A673 (cell line): ENCODE measurements at regions of chr15 and their contacts with region 1.

Region 1: DNA sequence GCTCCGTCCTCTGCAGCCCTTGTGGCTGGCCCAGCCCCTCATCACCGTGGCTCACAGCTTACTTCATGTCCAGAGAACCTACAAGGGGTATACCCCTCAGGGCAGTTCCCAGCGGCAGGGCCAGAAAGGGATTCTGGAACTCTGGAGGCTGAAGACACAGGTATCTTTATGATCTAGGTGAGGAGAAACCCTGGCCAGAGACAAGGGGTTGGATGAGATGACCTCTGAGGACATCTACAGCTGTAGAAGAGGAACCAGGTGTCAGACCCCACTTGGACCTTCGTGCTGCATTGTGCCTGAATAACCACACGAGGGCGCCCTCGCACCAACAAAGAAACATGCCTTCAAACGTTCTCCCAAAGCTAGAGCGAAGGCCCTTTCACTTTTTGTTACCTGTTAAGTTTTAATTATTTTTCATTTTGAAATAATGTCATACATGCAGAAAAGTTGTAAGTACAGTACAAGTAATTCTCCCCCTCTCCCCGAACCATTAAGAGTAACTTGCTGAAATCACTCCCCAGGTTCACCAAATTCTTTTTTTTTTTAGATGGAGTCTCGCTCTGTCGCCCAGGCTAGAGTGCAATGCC is 118.7 kb upstream of the SMAD3 start:
- DNase-seq: peak; percentile 74
- H3K4me3 ChIP-seq: peak overlapping the region; percentile 20
- H3K27ac ChIP-seq: no peak overlapping the region
- H3K4me1 ChIP-seq: no peaks in the 10 kb centered on the region
- H3K27me3 ChIP-seq: no peaks in the 10 kb centered on the region
- CTCF ChIP-seq: peak; percentile 92

Region 2: DNA sequence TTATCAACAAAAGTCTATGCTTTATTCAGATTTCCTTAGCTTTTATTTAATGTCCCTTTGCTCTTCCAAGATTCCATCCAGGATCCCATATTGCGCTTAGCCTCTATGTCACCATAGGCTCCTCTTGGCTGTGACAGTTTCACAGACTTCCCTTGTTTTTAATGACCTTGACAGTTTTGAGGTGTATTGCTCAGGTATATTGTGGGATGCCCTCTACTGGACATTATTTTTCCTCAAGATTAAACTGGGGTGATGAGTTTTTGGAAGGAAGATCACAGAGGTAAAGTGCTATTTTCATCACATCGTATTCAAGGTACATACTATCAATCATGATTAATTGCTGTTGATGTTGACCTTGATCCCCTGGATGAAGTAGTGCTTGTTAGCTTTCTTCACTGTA is 19.6 kb after region 1 on chr15:
- CTCF ChIA-PET with region 1: no interaction called
- POLR2A ChIA-PET with region 1: no interaction called
- intact Hi-C with region 1: no loop called
- DNase-seq: no peak
- H3K4me3 ChIP-seq: no peak overlapping the region
- H3K27ac ChIP-seq: no peak overlapping the region
- H3K4me1 ChIP-seq: no peaks in the 10 kb centered on the region
- H3K27me3 ChIP-seq: no peaks in the 10 kb centered on the region
- CTCF ChIP-seq: peak; percentile 31

Region 3: DNA sequence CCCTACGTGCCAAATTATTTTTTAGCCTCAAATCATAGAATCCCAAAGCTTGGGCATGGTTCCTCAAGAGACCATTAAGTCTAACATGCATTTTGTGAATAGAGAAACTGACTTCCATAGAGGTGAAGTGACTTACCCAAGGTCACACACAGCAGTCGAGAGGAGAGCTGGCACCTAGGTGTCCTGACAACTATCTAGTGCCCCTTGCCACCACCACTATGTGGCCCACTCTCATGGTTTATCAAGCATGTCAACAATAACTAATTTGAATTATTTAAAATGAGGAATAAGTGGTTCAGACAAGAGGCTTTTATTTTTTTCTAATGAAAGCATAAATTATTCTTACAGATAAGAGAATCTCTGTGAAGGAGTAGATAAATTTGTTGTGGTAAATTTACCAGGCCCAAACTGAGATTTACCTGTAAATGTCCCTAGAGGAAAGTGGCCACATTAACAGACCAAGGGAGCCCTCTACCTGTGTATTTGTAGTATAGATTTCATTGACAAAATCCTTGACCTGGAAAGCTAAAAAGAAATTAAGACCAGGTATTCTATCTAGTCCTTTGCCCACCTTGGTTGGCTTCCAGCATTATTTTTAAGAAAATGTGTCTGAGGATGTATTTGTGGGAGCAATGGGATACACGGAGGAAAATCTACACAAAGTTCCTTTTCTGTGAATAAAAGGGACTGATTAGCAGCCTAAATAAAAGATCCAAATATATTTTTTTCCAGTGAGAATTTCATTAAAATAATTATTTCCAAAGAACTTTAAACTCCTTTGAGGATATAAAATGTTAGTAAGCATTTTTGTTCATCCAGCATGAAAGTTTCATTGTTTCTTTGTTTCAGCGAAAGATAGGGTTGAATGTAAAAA is 357.1 kb after region 1 on chr15:
- CTCF ChIA-PET with region 1: interaction called, 9 read pairs
- POLR2A ChIA-PET with region 1: no interaction called
- intact Hi-C with region 1: loop called (anchors 1 kb)
- DNase-seq: peak; percentile 17
- H3K4me3 ChIP-seq: no peak overlapping the region
- H3K27ac ChIP-seq: no peak overlapping the region
- H3K4me1 ChIP-seq: peaks cover 13% of the 10 kb centered on the region
- H3K27me3 ChIP-seq: no peaks in the 10 kb centered on the region
- CTCF ChIP-seq: peak; percentile 54